ENCODE measurements at regions of chr17 and their contacts with region 1.

Region 1: DNA sequence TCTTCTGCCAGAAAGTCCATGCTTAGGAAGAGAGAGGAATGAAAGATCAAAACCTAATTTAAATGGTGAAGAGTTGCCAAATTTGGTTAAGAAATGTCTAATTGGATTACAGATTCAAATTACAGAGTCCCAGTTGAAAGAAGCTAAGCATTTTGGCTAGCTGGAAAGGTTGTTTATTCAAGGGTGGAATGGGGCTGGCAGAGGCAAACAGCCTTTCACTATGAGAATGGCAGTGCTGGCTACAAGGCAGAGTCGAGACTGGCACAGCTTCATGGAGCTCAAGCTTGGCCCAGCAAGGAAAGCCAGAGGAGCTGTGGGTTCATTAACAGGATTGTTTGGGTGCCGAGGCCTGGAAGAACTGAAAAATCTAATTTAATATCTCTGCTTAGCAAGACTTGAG is 13.6 kb downstream of the MAP3K3 start:
- DNase-seq: no peak
- H3K4me3 ChIP-seq: no peak overlapping the region
- H3K27ac ChIP-seq: no peak overlapping the region
- H3K4me1 ChIP-seq: peaks cover 0 to 3% of the 10 kb centered on the region in 2 experiments; a peak in 1 of 4 replicates
- H3K27me3 ChIP-seq: no peaks in the 10 kb centered on the region
- CTCF ChIP-seq: no peak
- EP300 ChIP-seq: no peak
- RAD21 ChIP-seq: no peak

Region 2: GRCh38 chr17:63464691-63465236 is 171.0 kb before region 1 on chr17:
- CTCF ChIA-PET with region 1: no interaction called
- POLR2A ChIA-PET with region 1: no interaction called
- DNase-seq: no peak
- H3K4me3 ChIP-seq: no peak overlapping the region
- H3K27ac ChIP-seq: no peak overlapping the region
- H3K4me1 ChIP-seq: peaks cover 7 to 11% of the 10 kb centered on the region in 2 experiments
- H3K27me3 ChIP-seq: no peaks in the 10 kb centered on the region
- CTCF ChIP-seq: no peak
- EP300 ChIP-seq: no peak
- RAD21 ChIP-seq: no peak

Region 3: GRCh38 chr17:63646488-63646806 is 10.7 kb after region 1 on chr17:
- CTCF ChIA-PET with region 1: interaction called, 13 read pairs
- POLR2A ChIA-PET with region 1: no interaction called
- DNase-seq: no peak
- H3K4me3 ChIP-seq: no peak overlapping the region
- H3K27ac ChIP-seq: no peak overlapping the region
- H3K4me1 ChIP-seq: no peaks in the 10 kb centered on the region; a peak in 1 of 4 replicates
- H3K27me3 ChIP-seq: no peaks in the 10 kb centered on the region
- CTCF ChIP-seq: no peak
- EP300 ChIP-seq: no peak
- RAD21 ChIP-seq: no peak

Region 4: GRCh38 chr17:63722403-63722802 is 86.6 kb after region 1 on chr17:
- CTCF ChIA-PET with region 1: no interaction called
- POLR2A ChIA-PET with region 1: no interaction called
- DNase-seq: peak; percentile 25
- H3K4me3 ChIP-seq: no peak overlapping the region
- H3K27ac ChIP-seq: no peak overlapping the region
- H3K4me1 ChIP-seq: peaks cover 0 to 5% of the 10 kb centered on the region in 2 experiments; a peak in 2 of 4 replicates
- H3K27me3 ChIP-seq: no peaks in the 10 kb centered on the region
- CTCF ChIP-seq: no peak
- EP300 ChIP-seq: no peak
- RAD21 ChIP-seq: no peak

Region 5: GRCh38 chr17:63798572-63799106 is 162.9 kb after region 1 on chr17:
- CTCF ChIA-PET with region 1: no interaction called
- POLR2A ChIA-PET with region 1: no interaction called
- DNase-seq: no peak
- H3K4me3 ChIP-seq: no peak overlapping the region
- H3K27ac ChIP-seq: peak overlapping the region; percentile 5 to 17; a peak in 2 of 4 replicates
- H3K4me1 ChIP-seq: peaks cover 0 to 5% of the 10 kb centered on the region in 2 experiments; a peak in 2 of 4 replicates
- H3K27me3 ChIP-seq: no peaks in the 10 kb centered on the region
- CTCF ChIP-seq: no peak
- EP300 ChIP-seq: no peak
- RAD21 ChIP-seq: no peak

Region 6: DNA sequence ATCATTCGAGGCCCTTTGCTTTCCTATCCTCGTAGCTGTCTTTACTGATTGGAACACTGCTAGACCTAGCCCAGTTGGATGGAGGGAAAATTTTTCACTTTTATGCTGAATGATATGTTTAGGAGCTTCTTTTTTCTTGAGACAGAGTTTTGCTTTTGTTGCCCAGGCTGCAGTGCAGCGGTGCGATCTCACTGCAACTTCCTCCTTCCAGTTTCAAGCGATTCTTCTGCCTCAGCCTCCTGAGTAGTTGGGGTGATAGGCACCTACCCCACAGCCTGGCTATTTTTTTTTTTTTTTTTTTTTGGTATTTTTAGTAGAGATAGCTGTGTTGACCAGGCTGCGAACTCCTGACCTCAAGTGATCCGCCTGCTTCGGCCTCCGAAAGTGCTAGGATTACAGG is 174.2 kb after region 1 on chr17:
- CTCF ChIA-PET with region 1: no interaction called
- POLR2A ChIA-PET with region 1: no interaction called
- DNase-seq: no peak
- H3K4me3 ChIP-seq: no peak overlapping the region
- H3K27ac ChIP-seq: no peak overlapping the region
- H3K4me1 ChIP-seq: no peaks in the 10 kb centered on the region
- H3K27me3 ChIP-seq: no peaks in the 10 kb centered on the region
- CTCF ChIP-seq: no peak
- EP300 ChIP-seq: no peak
- RAD21 ChIP-seq: no peak

Measured in SK-N-SH (cell line).